Right ventricle myocardium inferior (tissue), 1 donor: ENCODE measurements at regions of chr3 and their contacts with region 1.

Region 1: GRCh38 chr3:20185701-20186598 is at the start of gene SGO1:
- DNase-seq: peak; percentile 100
- ATAC-seq: peak; percentile 100
- total RNA-seq, gene SGO1: 0.43 TPM

Region 2: GRCh38 chr3:19885468-19885867 is 300.5 kb before region 1 on chr3:
- intact Hi-C with region 1: loop called (anchors 5 kb)
- DNase-seq: no peak
- ATAC-seq: no peak

Region 3: GRCh38 chr3:19946832-19947548 is 239.0 kb before region 1 on chr3 and contains the start of gene RAB5A:
- intact Hi-C with region 1: loop called (anchors 2 kb)
- DNase-seq: peak; percentile 99
- ATAC-seq: peak; percentile 98
- total RNA-seq, gene RAB5A: 48.2 TPM

Region 4: GRCh38 chr3:20130106-20130505 is 55.8 kb before region 1 on chr3:
- intact Hi-C with region 1: no loop called
- DNase-seq: no peak
- ATAC-seq: no peak

Region 5: DNA sequence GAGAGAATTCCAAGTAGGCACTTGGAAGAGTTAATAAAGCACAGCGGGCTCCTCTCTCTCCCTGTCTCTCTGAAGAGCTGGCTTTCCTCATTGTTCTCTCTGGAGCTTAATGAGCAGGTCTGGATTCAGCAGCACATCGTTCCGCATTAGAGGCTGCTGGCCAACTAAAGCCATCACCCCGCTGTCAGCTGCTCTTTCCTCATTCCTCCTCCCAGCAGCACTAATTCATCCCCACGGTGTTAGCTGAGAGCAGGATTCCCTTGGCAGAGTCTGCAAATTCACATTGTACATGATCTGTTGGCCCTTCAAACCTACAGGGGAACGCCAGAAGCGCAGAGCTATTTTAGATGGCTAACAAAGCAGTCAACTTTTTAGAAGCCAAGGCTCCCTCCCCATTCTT is 44.1 kb before region 1 on chr3:
- intact Hi-C with region 1: loop called (anchors 5 kb)
- DNase-seq: peak; percentile 68
- ATAC-seq: peak; percentile 95